ENCODE measurements at regions of chr1 and their contacts with region 1.

Region 1: DNA sequence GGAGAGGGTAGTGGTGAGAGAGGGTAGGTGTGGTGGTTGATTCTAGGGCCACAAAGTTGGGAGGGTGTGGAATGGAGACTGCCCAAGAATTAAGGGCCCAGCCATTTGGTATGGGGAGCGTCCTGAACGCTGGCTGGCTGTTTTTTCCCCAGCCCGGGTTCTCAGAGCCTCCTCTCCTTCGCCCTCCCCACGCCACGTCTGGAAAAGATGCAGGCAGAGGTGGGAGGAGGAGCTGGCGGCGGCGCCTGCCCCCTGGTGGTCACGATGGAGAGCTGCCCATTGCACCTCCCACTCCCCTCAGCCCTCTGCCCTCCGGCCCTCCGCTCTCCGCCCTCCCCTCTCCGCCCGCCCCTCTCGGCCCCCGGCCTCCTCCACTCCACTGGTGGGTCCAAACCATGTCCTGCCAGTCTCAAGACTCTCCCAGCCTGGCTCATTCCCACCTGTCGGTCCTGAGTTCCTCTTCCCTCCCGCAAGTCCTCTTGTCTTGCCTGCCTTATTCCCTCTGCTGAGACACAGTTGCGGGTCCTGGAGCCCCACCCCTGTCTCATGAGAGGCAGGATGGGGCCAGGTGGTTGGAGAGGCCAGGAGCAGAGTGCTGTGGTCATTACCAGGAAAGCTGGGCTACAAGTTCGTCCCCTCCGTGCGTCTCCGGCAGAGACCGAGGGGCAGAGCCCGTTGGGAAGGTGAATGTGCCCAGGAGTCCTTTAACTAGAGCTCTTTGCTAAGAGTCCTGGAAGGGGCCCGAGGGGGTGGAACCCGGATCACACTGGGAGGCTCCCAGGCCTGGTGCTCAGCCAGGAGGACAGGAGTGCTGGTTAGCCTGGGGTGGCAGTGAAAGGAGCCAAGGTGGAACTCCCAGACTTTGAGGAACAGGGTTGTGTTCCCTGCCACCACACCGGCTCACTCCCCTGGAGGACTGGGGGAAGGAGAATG is 22.6 kb downstream of the ETNK2 start:
- DNase-seq: peak; percentile 61 to 79 (median 71)
- ATAC-seq: peak; percentile 90
- H3K4me3 ChIP-seq: no peak overlapping the region
- H3K4me1 ChIP-seq: no peaks in the 10 kb centered on the region
- CTCF ChIP-seq: peak; percentile 69

Region 2: GRCh38 chr1:203861379-203862184 is 267.6 kb before region 1 on chr1 and contains the start of gene SNRPE:
- intact Hi-C with region 1: loop called in 1 of 2 experiments (anchors 5 kb)
- DNase-seq: peak; percentile 95 to 97 (median 97)
- ATAC-seq: peak; percentile 98
- H3K4me3 ChIP-seq: peak within 1 kb of the TSS; percentile 50
- H3K4me1 ChIP-seq: peaks cover 7% of the 10 kb centered on the region
- CTCF ChIP-seq: peak; percentile 88
- total RNA-seq, gene SNRPE: 53.2 to 91.1 (median 53.5) TPM

Region 3: GRCh38 chr1:203871107-203871875 is 257.9 kb before region 1 on chr1:
- intact Hi-C with region 1: loop called in 1 of 2 experiments (anchors 5 kb)
- DNase-seq: peak in 1 of 3 donors; percentile 45
- ATAC-seq: peak; percentile 84
- H3K4me3 ChIP-seq: no peak overlapping the region
- H3K4me1 ChIP-seq: no peaks in the 10 kb centered on the region
- CTCF ChIP-seq: no peak

Region 4: GRCh38 chr1:204072931-204073836 is 56.0 kb before region 1 on chr1 and contains the start of gene SOX13:
- intact Hi-C with region 1: loop called in 1 of 2 experiments (anchors 10 kb)
- DNase-seq: peak; percentile 88 to 91 (median 91)
- ATAC-seq: peak; percentile 83
- H3K4me3 ChIP-seq: peak within 1 kb of the TSS; percentile 46
- H3K4me1 ChIP-seq: peaks cover 8% of the 10 kb centered on the region
- CTCF ChIP-seq: no peak
- total RNA-seq, gene SOX13: 39.8 to 69.2 (median 40.7) TPM

Region 5: DNA sequence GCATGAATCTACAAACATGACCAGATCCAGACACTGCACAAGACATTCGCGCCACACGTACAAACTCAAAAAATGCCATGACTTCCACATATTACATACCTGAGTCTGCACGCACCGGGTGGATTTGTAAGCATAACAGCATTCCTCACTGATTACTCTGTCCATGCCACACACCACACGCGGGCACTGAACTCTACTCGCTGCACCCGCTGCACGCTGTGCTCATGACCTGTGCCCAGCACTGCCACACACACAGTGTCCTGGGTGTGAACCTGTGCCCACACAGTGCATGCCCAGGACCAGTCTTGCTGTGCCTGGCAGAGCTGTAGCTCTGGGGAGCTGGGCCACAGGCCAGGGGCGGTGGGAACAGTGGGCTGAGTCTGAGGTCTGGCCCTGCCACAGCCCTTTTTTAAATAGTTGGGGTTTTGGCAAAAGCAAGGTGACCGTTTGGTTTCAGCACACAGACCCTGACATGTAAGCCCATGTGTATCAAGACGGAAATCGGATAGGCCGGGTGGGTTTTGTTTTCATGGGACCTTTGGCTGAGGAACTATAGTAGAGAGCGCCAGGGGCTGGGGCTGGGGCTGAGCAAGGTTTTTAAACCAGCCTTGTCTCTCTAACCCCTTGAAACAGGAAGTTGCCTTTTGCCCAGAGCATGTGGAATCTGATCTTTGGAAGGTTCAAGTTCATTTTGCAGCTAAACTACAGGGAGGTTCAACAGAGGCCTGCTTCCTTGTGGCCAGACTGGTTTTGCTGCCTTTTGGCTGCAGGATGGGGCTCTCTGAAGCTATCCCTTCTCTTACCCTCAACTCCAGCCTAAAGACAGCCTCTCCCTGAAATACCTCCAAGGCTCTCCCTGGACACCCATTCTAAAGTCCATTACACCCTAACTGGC is 96.9 kb after region 1 on chr1:
- intact Hi-C with region 1: no loop called
- DNase-seq: peak in 2 of 3 donors; percentile 64 to 69
- ATAC-seq: peak; percentile 82
- H3K4me3 ChIP-seq: no peak overlapping the region
- H3K4me1 ChIP-seq: peaks cover 9% of the 10 kb centered on the region
- CTCF ChIP-seq: no peak

Measured in mucosa of descending colon (tissue), 3 donors.